ENCODE measurements at regions of chrX and their contacts with region 1.

Region 1: GRCh38 chrX:110188756-110189558 is 128.9 kb downstream of the AMMECR1 start:
- DNase-seq: no peak
- H3K4me3 Mint-ChIP-seq: no peak overlapping the region
- H3K27ac Mint-ChIP-seq: peak overlapping the region; percentile 83
- H3K4me1 Mint-ChIP-seq: peaks cover 20% of the 10 kb centered on the region
- H3K27me3 Mint-ChIP-seq: no peaks in the 10 kb centered on the region

Region 2: GRCh38 chrX:110172215-110172614 is 16.7 kb before region 1 on chrX:
- CTCF ChIA-PET with region 1: no interaction called
- POLR2A ChIA-PET with region 1: no interaction called
- DNase-seq: no peak
- H3K4me3 Mint-ChIP-seq: no peak overlapping the region
- H3K27ac Mint-ChIP-seq: no peak overlapping the region
- H3K4me1 Mint-ChIP-seq: no peaks in the 10 kb centered on the region
- H3K27me3 Mint-ChIP-seq: no peaks in the 10 kb centered on the region

Region 3: GRCh38 chrX:110201799-110202198 is 12.8 kb after region 1 on chrX:
- CTCF ChIA-PET with region 1: interaction called, 10 read pairs
- POLR2A ChIA-PET with region 1: interaction called, 3 read pairs
- DNase-seq: no peak
- H3K4me3 Mint-ChIP-seq: no peak overlapping the region
- H3K27ac Mint-ChIP-seq: no peak overlapping the region
- H3K4me1 Mint-ChIP-seq: no peaks in the 10 kb centered on the region
- H3K27me3 Mint-ChIP-seq: no peaks in the 10 kb centered on the region